Breast epithelium (tissue), 4 donors: ENCODE measurements at regions of chr17 and their contacts with region 1.

Region 1: GRCh38 chr17:36475346-36475970 is 11.0 kb upstream of the ZNHIT3 start:
- DNase-seq: no peak
- H3K4me3 ChIP-seq: no peak overlapping the region
- H3K27ac ChIP-seq: no peak overlapping the region
- H3K4me1 ChIP-seq: no peaks in the 10 kb centered on the region
- H3K27me3 ChIP-seq: peaks cover 0 to 8% of the 10 kb centered on the region in 2 donors
- CTCF ChIP-seq: no peak
- POLR2A ChIP-seq: no peak

Region 2: DNA sequence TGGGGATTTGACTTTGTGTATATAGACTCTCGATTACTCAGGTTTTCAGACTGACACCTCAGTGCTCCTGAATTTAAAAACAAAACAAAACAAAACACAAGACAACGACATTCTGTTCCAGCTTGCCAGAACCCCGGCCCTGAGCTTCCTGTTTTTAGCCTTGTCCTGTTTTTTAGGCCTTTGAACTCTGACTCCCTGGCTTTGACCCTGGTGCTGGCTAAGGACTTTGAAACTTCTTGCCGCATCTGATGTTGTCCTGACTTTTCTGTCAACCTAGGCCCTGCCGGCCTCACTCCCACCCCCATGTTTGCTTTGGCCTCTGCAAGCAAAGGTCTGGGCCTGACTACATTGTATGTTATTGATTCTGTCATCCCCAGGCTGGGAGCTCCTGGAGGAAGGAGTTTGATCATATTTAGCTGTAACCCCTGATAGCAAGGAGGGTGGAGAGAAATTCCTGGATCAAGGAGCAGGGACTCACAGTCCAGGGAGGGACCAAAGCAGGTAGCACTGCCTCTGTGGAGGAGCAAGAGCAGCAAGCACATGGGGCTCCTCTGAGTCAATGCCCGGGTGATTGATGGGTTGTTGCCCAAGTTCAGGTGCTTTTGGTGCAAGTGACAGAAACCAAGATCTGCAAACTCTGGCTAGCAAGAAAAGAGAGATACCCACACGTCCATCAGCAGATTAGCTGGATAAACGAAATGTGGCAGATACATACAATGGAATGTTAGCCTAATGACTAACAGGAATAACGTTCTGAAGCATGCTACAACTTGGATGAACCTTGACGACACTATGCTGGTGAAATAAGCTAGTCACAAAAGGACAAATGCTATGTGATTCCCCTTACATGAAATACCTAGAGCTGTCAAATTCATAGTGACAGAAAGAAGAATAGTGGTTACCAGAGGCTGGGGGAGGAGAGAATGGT is 501.9 kb before region 1 on chr17:
- intact Hi-C with region 1: loop called (anchors 2 kb)
- DNase-seq: no peak
- H3K4me3 ChIP-seq: no peak overlapping the region
- H3K27ac ChIP-seq: no peak overlapping the region
- H3K4me1 ChIP-seq: no peaks in the 10 kb centered on the region
- H3K27me3 ChIP-seq: no peaks in the 10 kb centered on the region
- CTCF ChIP-seq: no peak
- POLR2A ChIP-seq: no peak